ENCODE measurements at regions of chr3 and their contacts with region 1.

Region 1: GRCh38 chr3:172658344-172659245 is 52.3 kb downstream of the NCEH1 start:
- DNase-seq: no peak
- ATAC-seq: peak in 1 of 2 donors; percentile 89

Region 2: GRCh38 chr3:172607305-172608121 is 51.1 kb before region 1 on chr3:
- intact Hi-C with region 1: loop called in 1 of 2 experiments (anchors 10 kb)
- DNase-seq: no peak
- ATAC-seq: peak; percentile 47 to 78

Measured in left cardiac atrium (tissue), 4 donors.